ENCODE measurements at regions of chr11 and their contacts with region 1.

Region 1: DNA sequence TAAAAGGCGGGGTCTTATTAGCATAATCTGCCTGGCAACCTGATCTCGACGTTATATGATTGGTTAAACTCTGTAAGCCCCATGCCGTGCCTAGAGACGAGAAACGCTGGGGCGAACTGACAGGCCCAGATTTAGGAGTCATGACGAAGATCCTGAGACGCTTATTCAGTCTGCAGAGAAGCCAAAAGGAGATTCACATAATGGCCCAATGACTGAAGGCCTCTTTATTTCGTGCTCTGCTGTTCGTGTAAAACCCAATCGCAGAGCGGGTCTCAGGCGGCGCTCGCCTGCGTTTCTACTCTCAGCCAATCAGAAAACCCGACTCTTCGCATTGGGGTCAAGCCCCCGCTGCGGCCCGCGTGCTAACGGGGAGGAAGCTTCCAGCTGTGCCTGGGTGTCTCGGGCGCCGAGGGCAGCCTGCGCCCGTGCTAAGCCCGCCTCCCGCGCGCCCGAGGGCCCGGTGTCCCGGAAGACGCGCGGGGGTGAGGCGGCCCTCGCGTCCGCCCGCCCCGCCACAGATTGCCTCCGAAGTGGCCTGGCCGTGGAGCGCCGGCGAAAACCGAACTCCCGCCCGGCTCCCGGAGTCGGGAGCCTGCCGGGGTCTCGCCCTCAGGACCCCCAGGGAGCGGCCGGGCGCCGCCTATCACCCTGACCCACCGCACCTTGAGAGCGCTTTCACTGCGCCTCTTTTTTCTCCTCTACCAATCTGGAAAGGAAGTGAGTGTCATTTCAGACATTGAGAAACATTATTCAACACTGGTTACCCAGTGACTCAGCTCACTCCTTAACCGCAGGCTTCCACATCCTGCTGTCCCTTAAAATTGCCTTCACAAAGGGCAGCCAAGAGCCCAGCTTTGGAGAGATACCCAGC is 446 bp upstream of the PRDM10 start:
- DNase-seq: peak; percentile 86
- H3K4me3 Mint-ChIP-seq: peak overlapping the region; percentile 86
- H3K27ac Mint-ChIP-seq: peak overlapping the region; percentile 100
- H3K4me1 Mint-ChIP-seq: peaks cover 5% of the 10 kb centered on the region
- H3K27me3 Mint-ChIP-seq: no peaks in the 10 kb centered on the region
- CTCF ChIP-seq: no peak

Region 2: GRCh38 chr11:130037058-130037457 is 34.0 kb after region 1 on chr11:
- CTCF ChIA-PET with region 1: no interaction called
- intact Hi-C with region 1: loop called (anchors 5 kb)
- DNase-seq: peak; percentile 8
- H3K4me3 Mint-ChIP-seq: no peak overlapping the region
- H3K27ac Mint-ChIP-seq: no peak overlapping the region
- H3K4me1 Mint-ChIP-seq: peaks cover 15% of the 10 kb centered on the region
- H3K27me3 Mint-ChIP-seq: no peaks in the 10 kb centered on the region
- CTCF ChIP-seq: no peak

Region 3: DNA sequence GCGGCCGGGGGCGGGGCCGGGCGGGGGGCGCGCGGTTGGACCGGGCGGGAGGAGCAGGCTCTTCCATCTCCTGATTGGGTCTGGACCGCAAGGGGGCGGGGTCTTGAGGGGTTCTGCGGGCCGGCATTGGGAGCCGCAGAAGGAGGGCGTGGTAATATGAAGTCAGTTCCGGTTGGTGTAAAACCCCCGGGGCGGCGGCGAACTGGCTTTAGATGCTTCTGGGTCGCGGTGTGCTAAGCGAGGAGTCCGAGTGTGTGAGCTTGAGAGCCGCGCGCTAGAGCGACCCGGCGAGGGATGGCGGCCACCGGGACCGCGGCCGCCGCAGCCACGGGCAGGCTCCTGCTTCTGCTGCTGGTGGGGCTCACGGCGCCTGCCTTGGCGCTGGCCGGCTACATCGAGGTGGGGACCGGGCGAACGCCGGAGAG is 66.6 kb after region 1 on chr11 and contains the start of gene APLP2:
- CTCF ChIA-PET with region 1: interaction called, 11 read pairs
- intact Hi-C with region 1: loop called (anchors 1 kb)
- DNase-seq: peak; percentile 97
- H3K4me3 Mint-ChIP-seq: peak within 1 kb of the TSS; percentile 92
- H3K27ac Mint-ChIP-seq: peak within 1 kb of the TSS; percentile 85
- H3K4me1 Mint-ChIP-seq: peaks cover 26% of the 10 kb centered on the region
- H3K27me3 Mint-ChIP-seq: no peaks in the 10 kb centered on the region
- CTCF ChIP-seq: no peak
- total RNA-seq, gene APLP2: 446 and 447 TPM in 2 replicates

Region 4: DNA sequence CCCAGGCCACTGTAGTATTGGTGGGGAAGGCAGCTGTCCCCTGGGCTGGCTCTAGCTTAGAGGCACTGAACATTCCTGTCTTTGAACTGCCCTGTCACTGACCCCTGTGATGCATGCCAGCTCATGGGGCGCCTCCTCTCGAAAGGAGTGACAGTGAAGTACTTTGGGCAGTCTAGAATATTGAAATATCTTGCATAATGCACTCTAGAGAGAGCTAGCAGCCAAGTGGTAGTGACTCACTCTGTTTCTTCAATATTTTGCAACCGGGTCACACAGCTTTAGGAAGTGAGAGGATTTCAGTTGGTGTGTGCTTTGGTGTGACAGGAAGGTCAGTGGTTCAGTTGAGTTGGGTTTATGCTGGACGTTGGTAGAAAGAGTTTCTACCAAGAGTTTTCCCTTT is 121.0 kb after region 1 on chr11:
- CTCF ChIA-PET with region 1: interaction called, 6 read pairs
- intact Hi-C with region 1: loop called (anchors 5 kb)
- DNase-seq: peak; percentile 72
- H3K4me3 Mint-ChIP-seq: peak overlapping the region; percentile 34
- H3K27ac Mint-ChIP-seq: peak overlapping the region; percentile 76
- H3K4me1 Mint-ChIP-seq: peaks cover 43% of the 10 kb centered on the region
- H3K27me3 Mint-ChIP-seq: no peaks in the 10 kb centered on the region
- CTCF ChIP-seq: no peak

Region 5: GRCh38 chr11:130964058-130964792 is 961.1 kb after region 1 on chr11:
- CTCF ChIA-PET with region 1: no interaction called
- intact Hi-C with region 1: no loop called
- DNase-seq: no peak
- H3K4me3 Mint-ChIP-seq: no peak overlapping the region
- H3K27ac Mint-ChIP-seq: no peak overlapping the region
- H3K4me1 Mint-ChIP-seq: no peaks in the 10 kb centered on the region
- H3K27me3 Mint-ChIP-seq: no peaks in the 10 kb centered on the region
- CTCF ChIP-seq: no peak